AG04449 (cell line): ENCODE measurements at regions of chr3 and their contacts with region 1.

Region 1: DNA sequence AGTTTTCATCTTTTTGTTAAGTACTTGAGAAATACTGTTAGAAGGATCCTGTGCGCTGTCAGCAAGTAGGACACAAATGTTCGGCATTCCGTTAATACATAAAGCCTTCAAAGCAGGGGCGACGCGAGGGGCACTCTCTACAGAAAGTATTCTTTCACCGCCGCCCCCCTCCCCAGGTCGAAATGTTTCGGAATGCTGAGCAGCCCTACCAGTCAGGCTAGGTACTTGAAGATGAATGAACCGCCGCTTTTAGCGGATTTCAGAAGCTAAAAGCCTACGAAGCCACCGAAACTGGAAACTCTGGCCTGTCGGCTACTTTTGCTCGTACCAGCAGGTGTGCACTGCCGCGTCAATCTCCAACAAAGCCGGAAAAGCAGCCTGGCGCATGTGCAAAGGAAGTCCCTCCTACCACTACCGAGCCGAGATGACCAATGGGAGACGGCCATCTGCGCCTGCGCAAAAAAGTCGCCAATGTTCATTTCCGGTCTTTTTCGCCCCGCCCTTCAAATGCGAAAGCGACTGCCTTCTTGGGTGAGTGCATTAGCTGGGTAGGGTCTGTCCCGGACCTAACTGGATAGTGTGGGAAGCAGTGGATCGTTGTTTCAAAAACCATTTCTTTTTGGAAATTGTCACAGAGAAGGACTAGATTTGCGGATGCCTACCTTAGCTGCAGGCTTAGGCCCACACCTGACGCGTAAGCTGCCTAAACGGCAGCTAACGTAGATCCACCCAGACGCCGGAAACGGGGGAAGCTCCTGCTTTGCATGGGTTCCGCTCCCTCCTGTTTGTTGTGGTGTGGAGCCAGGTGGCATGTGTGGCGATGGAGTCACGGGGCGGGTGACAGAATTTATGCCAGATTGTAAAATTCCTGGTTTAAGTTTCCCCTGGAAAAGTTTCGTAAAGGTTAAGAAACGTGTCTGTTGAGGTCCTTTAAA is at the start of gene WDR5B:
- DNase-seq: peak; percentile 86
- H3K4me3 ChIP-seq: peak within 1 kb of the TSS; percentile 87
- CTCF ChIP-seq: no peak

Region 2: DNA sequence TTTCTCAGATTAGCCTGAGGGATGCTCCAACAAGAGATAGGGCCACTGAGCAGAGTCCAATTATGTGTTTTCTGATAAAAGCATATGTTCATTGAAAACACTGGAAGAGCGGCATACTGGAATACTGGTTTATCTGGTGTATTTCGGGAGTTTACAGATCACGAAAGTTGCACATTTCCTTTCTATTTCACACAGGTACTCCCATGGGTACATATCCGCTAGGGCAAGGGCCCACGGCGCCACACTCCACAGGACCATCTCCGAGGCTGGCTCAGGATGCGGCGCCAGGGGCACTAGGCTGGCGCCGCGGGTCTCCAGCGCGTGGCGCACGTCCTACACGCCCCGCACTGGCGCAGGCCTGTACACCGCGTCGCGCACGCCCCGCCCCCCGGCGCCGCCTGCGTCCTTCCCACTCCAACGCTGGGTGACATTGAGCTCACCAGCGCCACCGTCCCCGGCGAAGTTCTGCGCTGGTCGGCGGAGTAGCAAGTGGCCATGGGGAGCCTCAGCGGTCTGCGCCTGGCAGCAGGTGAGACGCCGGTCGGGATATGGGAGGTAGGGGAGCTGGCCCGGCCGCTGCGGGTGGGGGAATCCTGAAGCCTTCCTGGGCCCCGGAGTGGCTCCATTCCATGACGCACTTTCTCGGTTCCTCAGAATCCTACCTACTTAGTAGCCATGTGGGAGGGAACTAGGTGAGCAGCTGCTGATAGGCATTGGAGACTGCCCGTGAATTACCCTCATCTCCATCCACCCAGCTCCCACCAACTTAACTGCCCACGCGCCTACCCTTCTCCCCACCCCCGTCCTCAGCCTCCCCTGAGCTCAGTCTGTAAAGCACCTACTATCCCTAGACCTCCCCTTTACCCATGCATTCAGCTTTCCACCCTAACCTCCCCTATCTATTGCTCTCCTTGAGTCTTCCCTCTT is 32.0 kb before region 1 on chr3 and contains the start of gene FAM162A:
- CTCF ChIA-PET with region 1: interaction called, 11 read pairs
- POLR2A ChIA-PET with region 1: interaction called, 5 read pairs
- DNase-seq: peak; percentile 36
- H3K4me3 ChIP-seq: peak within 1 kb of the TSS; percentile 78
- CTCF ChIP-seq: peak; percentile 73